Activated CD4-positive, alpha-beta memory T cell treated with anti-CD3 and anti-CD28 coated beads, Interleukin-2, amount 10 ng/mL, durations not matched to agents 7 days and 5 days (primary cell): ENCODE measurements at regions of chr3 and their contacts with region 1.

Region 1: GRCh38 chr3:23916886-23917678 is at the starts of genes NKIRAS1 and RPL15:
- DNase-seq: peak; percentile 97
- H3K4me3 Mint-ChIP-seq: peak within 1 kb of the TSS; percentile 98
- H3K27ac Mint-ChIP-seq: peak within 1 kb of the TSS; percentile 93
- H3K4me1 Mint-ChIP-seq: peaks cover 55% of the 10 kb centered on the region
- H3K27me3 Mint-ChIP-seq: peaks cover 5% of the 10 kb centered on the region
- total RNA-seq, gene NKIRAS1: 3.0 to 3.1 TPM
- total RNA-seq, gene RPL15: 1,398 to 1,426 TPM

Region 2: DNA sequence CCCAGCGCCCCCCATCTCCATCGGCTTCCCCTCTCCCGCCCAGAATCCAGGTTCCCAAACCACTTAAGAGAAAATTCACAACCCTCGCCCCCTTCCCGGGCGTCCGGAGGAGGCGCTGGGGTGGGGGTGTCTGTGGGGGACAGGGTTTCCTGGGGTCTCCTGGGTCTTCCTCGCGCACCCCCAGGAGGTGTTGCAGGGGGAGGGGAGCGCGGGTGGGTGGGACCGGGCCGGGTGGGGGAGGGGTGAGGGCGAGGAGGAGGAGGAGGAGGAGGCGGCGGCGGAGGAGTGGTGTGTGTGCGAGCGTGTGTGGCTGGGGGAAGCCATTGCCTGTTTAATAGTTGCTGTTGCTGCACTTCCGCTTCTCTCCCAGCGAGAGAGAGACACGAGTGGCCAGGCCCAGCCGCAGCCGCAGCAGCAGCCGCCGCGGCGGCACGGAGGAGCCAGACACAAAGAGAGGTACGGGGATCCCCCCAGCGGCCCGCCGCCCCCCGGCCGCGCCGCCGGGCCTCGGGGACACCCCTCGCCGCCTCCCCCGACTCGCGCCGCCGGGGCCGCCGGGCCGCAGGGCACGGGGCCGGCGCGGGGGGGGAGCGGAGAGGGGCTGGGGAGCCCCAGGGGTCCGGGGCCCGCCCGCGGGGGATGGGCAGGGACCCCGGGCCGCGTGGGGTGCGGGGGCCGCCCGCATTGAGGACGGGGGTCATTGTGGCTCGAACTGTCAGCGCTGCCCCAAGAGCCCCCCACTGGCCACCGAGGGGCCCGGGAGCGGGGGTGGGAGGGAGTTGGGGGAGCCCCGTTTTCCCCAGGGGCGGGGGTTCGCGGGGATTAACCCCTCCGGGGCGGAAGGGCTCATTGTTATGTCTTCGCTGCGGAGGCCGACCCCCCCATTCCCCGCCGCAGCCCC is 111.2 kb before region 1 on chr3 and contains the start of gene UBE2E1:
- CTCF ChIA-PET with region 1: no interaction called
- POLR2A ChIA-PET with region 1: interaction called, 64 read pairs
- DNase-seq: peak; percentile 78
- H3K4me3 Mint-ChIP-seq: peak within 1 kb of the TSS; percentile 91
- H3K27ac Mint-ChIP-seq: peak within 1 kb of the TSS; percentile 67
- H3K4me1 Mint-ChIP-seq: peaks cover 39% of the 10 kb centered on the region
- H3K27me3 Mint-ChIP-seq: peaks cover 20% of the 10 kb centered on the region
- total RNA-seq, gene UBE2E1: 64.0 to 72.8 TPM

Region 3: GRCh38 chr3:23888617-23889228 is 28.4 kb before region 1 on chr3:
- CTCF ChIA-PET with region 1: interaction called, 6 read pairs
- POLR2A ChIA-PET with region 1: interaction called, 15 read pairs
- DNase-seq: no peak
- H3K4me3 Mint-ChIP-seq: no peak overlapping the region
- H3K27ac Mint-ChIP-seq: no peak overlapping the region
- H3K4me1 Mint-ChIP-seq: no peaks in the 10 kb centered on the region
- H3K27me3 Mint-ChIP-seq: no peaks in the 10 kb centered on the region

Region 4: GRCh38 chr3:23945903-23946751 is 29.0 kb after region 1 on chr3:
- CTCF ChIA-PET with region 1: interaction called, 13 read pairs
- POLR2A ChIA-PET with region 1: interaction called, 99 read pairs
- DNase-seq: peak; percentile 97
- H3K4me3 Mint-ChIP-seq: peak overlapping the region; percentile 80
- H3K27ac Mint-ChIP-seq: peak overlapping the region; percentile 71
- H3K4me1 Mint-ChIP-seq: peaks cover 30% of the 10 kb centered on the region
- H3K27me3 Mint-ChIP-seq: peaks cover 27% of the 10 kb centered on the region